ENCODE measurements at regions of chr1 and their contacts with region 1.

Region 1: DNA sequence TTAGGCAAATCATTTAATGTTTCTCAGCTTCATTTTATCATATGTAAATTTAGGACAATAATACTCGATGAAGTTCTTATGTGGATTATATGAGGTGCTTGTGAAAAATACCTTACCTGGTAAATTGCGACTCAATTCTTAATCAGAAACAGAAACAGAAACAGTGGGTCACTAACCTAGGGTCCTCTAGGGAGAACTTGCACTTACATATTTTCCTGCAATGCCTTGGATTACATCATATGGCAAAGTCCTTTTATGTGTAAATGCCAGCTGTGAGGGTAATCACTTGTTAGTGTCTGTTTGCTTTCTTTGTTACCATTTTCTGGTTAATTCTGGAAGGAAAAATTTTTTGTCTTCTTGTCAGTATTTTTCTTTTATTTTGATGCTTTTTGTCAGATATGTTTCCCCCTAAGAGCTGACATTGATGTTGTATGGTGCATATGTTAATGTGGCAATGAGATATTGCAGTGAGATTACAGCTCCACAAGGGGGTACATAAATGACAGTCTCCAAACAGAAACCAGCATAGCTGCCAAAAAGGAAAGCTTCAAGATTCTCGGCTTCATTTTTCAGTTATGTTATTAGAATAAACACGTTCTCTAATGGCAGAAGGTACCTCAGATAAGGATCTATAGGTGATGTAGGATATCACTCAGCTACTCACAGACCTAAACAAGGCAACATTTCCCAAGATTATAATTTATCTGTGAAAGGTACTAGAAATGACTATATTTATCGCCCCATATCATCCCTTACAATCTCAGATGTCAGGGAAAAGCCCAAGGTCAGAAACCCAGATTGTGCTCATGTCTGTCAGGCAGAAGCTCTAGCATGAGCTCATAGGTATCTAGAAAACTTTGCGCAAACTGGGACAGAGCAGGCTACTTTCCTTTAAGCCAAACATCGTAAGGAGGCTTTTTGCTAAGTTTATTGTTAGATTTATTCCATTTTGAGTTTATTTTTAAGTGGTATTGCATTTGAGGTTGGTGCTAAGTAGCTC is 119.9 kb downstream of the FASLG start:
- DNase-seq: no peak
- ATAC-seq: peak; percentile 91
- H3K4me3 Mint-ChIP-seq: peak overlapping the region; percentile 24
- H3K27ac Mint-ChIP-seq: peak overlapping the region; percentile 44
- H3K4me1 Mint-ChIP-seq: peaks cover 28% of the 10 kb centered on the region
- H3K27me3 Mint-ChIP-seq: no peaks in the 10 kb centered on the region
- CTCF ChIP-seq: peak; percentile 52

Region 2: DNA sequence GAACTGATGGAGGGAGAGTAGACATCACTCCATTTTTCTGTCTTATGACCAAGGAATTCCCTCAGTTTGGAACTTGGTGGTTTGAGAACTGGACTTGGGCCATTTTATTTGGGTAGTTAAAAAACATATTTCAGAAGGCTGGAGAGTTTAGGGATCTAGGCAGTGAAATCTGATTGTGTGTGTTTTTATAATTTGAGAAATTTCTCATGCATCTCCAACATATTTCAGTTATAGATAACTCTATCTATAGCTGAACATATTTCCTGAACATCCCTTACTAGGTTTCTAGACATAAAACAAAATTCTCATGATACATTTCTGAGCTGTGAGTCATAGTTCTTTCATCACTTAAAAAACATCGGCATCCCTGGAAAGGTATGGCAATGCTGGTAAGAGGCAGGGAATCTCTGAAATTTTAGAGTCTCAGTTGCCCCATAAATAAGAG is 17.2 kb before region 1 on chr1:
- CTCF ChIA-PET with region 1: interaction called, 18 read pairs
- POLR2A ChIA-PET with region 1: interaction called, 8 read pairs
- intact Hi-C with region 1: loop called (anchors 2 kb)
- DNase-seq: no peak
- ATAC-seq: no peak
- H3K4me3 Mint-ChIP-seq: no peak overlapping the region
- H3K27ac Mint-ChIP-seq: no peak overlapping the region
- H3K4me1 Mint-ChIP-seq: peaks cover 73% of the 10 kb centered on the region
- H3K27me3 Mint-ChIP-seq: peaks cover 7% of the 10 kb centered on the region
- CTCF ChIP-seq: no peak

Region 3: DNA sequence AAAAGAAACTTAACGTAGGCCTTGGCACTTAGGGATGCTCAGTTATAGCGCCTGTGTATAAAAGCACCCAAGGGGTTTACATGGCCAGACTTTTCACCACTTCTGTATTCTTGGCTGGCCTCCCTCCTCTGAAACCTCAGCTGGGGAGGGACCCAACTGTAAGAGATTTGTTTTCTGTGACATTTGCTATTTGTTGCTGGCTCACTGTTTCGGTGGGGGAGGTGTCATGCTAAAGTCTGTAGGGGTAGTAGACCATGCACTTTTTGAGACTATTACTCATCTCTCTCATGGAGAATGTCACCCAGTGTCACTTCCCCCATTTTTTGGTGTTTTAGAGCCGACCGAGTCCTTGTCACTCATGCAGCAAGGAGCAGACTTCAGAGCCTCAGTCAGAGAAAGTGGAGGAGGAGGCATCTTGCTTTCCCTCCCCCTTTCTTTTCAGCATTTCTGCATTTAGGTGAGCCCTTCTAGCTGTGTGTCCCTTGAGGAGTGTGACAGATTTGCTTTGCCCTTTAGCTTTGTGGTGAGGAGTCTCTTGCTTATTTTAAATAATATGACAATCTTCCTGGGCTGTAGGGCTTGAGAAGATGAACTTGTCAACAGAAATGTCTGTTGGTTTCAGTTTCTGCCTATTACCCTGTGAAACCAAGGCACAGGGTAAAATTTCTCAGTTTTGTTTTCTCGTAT is 40.2 kb after region 1 on chr1:
- CTCF ChIA-PET with region 1: interaction called, 12 read pairs
- POLR2A ChIA-PET with region 1: interaction called, 4 read pairs
- intact Hi-C with region 1: no loop called
- DNase-seq: peak; percentile 88
- ATAC-seq: peak; percentile 97
- H3K4me3 Mint-ChIP-seq: peak overlapping the region; percentile 43
- H3K27ac Mint-ChIP-seq: peak overlapping the region; percentile 83
- H3K4me1 Mint-ChIP-seq: peaks cover 47% of the 10 kb centered on the region
- H3K27me3 Mint-ChIP-seq: peaks cover 14% of the 10 kb centered on the region
- CTCF ChIP-seq: no peak

Measured in activated CD8-positive, alpha-beta T cell treated with anti-CD3 and anti-CD28 coated beads for 36 hours (primary cell).